ENCODE measurements at regions of chr14 and their contacts with region 1.

Region 1: GRCh38 chr14:24058260-24058950 is 6.6 kb downstream of the CARMIL3 start:
- DNase-seq: peak; percentile 58
- ATAC-seq: peak; percentile 93

Region 2: GRCh38 chr14:24093901-24094761 is 35.7 kb after region 1 on chr14 and contains the start of gene PCK2:
- intact Hi-C with region 1: loop called (anchors 5 kb)
- DNase-seq: peak; percentile 95
- ATAC-seq: peak; percentile 91
- total RNA-seq, gene PCK2: 2.7 TPM

Region 3: DNA sequence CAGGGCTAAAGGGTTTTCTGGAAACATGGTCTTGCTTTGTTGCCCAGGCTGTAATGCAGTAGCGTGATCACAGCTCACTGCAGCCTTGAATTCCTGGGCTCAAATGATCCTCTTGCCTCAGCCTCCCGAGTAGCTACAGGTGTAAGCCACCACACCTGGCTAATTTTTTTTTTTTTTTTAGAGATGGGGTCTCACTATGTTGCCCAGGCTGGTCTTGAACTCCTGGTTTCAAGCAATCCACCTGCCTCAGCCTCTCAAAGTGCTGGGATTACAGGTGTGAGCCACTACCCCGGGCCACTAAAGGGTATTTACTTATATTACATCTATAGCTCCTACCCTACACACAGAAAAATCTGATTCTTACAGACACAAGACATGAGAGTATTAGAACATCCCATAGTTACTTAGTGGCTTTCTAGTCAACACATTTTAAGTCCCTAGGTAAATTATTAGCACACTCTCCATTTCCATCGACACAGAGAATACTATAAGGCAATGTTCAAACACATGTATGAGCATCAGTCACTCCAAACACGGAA is 50.0 kb after region 1 on chr14:
- intact Hi-C with region 1: loop called (anchors 5 kb)
- DNase-seq: no peak
- ATAC-seq: no peak

Region 4: GRCh38 chr14:24952851-24953666 is 894.7 kb after region 1 on chr14:
- intact Hi-C with region 1: no loop called
- DNase-seq: no peak
- ATAC-seq: no peak